Activated CD4-positive, alpha-beta memory T cell treated with anti-CD3 and anti-CD28 coated beads, Interleukin-2, amount 10 ng/mL, durations not matched to agents 7 days and 5 days (primary cell): ENCODE measurements at regions of chr5 and their contacts with region 1.

Region 1: DNA sequence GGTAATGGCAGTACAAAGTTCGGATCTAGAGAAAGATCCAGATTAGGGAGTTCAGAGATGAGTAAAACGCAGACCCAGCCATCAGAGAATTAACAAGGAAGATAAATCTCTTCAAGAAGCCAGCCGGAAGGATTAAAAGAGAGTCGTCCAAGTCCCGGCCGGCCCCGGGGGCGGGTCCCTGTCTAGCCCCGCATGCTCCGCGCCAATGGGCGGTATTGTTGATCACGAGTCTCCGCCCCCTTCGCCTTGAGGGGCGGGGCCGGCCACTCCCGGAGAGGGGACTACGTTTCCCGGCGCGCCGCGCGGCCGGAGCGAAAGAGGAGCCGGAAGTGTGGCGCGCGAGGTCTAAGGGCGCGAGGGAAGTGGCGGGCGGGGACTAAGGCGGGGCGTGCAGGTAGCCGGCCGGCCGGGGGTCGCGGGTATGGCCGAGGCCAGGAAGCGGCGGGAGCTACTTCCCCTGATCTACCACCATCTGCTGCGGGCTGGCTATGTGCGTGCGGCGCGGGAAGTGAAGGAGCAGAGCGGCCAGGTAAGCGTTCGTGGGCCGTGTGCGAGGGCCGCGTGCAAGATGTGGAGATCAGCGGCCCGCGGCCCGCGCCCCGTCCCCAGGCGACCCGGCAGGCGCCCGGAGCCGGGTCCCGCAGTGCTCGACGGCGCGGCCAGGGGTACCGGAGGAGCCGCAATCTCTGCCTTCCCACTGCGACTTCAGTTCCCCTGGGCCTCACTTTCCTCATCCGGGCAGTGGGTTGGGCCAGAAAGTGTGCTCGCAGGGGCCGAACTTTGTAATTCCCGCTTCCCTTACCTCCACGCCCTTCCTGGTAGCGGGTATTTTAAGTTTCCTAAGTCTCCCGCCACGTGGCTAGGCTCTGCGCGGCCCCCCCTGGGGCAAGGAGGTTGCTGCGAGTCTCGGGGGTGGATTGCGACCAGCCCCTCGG is at the start of gene TCOF1:
- DNase-seq: peak; percentile 98
- H3K4me3 Mint-ChIP-seq: peak within 1 kb of the TSS; percentile 89
- H3K27ac Mint-ChIP-seq: peak within 1 kb of the TSS; percentile 83
- H3K4me1 Mint-ChIP-seq: peaks cover 43% of the 10 kb centered on the region
- H3K27me3 Mint-ChIP-seq: peaks cover 8% of the 10 kb centered on the region
- total RNA-seq, gene TCOF1: 52.8 to 53.0 TPM

Region 2: DNA sequence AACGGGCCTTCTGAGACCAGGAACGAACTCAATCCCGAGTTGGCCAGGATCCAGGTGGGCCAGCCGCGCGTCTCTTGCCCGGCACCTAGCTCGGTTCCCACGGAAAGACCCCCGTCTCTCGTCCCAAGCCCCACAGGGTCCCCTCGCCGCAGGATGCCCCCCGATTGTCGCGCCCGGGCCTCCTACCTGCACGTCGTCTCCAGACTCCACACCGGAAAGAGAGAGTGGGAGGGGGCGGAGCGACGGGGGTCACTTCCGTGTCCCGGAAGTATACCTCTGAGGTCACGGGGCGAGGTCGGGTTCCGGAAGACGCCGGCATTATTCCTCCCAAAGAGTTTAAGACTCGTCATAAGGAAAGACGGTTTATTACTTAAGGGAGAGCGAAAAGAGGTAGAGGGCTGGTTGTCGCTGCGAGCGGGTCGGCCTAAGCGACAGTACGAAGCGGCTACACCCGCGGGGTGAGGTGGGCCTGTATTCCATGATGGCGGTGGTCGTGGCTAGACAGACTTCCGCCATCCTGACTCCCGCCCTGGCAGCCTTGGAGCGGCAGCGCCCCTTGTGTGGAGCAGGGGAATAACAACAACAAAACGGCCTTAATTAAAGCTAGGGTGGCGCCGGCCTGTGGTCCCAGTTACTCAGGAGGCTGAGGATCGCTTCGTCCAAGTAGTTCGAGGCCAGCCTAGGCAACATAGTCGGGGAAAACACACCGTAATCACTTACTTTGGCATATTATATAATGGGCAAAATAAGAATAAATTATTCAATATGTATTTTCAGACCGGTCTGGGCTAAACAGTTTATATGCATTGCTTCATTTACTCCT is 92.1 kb after region 1 on chr5 and contains the start of gene RPS14:
- CTCF ChIA-PET with region 1: interaction called, 11 read pairs
- POLR2A ChIA-PET with region 1: interaction called, 9 read pairs
- DNase-seq: peak; percentile 95
- H3K4me3 Mint-ChIP-seq: peak within 1 kb of the TSS; percentile 82
- H3K27ac Mint-ChIP-seq: peak within 1 kb of the TSS; percentile 92
- H3K4me1 Mint-ChIP-seq: peaks cover 34% of the 10 kb centered on the region
- H3K27me3 Mint-ChIP-seq: no peaks in the 10 kb centered on the region
- total RNA-seq, gene RPS14: 2,316 to 2,367 TPM

Region 3: GRCh38 chr5:150461231-150461630 is 103.6 kb after region 1 on chr5:
- CTCF ChIA-PET with region 1: no interaction called
- POLR2A ChIA-PET with region 1: no interaction called
- DNase-seq: no peak
- H3K4me3 Mint-ChIP-seq: no peak overlapping the region
- H3K27ac Mint-ChIP-seq: no peak overlapping the region
- H3K4me1 Mint-ChIP-seq: peaks cover 25% of the 10 kb centered on the region
- H3K27me3 Mint-ChIP-seq: no peaks in the 10 kb centered on the region